Activated naive CD8-positive, alpha-beta T cell treated with anti-CD3 and anti-CD28 coated beads, Interleukin-2, amount 10 ng/mL, durations not matched to agents 7 days and 5 days (primary cell): ENCODE measurements at regions of chr4 and their contacts with region 1.

Region 1: DNA sequence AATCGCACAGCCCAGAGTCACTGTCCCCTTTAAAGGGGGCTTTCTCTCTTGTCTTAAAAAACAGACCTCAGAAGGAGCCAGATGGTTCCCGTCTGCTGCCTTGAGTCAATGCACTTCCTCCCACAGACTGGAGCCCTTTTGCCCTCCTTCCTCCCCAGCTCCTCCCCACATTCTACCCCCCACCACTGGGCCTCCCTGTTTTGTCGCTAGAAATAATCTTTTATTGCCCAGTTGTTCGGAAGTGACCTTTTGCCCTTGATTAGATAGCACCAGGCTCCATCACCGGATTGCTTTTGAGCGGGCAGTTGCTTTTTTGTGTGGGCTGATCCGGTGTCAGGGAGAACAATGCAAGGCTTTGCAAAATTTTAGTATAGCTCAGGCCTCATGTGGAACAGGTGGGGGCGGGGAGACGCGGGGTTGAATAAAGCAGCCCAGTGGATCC is 47.7 kb downstream of the SPRY1 start:
- DNase-seq: peak; percentile 56
- ATAC-seq: peak; percentile 87
- H3K4me3 Mint-ChIP-seq: peak overlapping the region; percentile 71
- H3K27ac Mint-ChIP-seq: peak overlapping the region; percentile 84
- H3K4me1 Mint-ChIP-seq: peaks cover 29% of the 10 kb centered on the region
- H3K27me3 Mint-ChIP-seq: no peaks in the 10 kb centered on the region

Region 2: GRCh38 chr4:123418351-123418931 is 25.9 kb before region 1 on chr4:
- POLR2A ChIA-PET with region 1: interaction called, 13 read pairs
- DNase-seq: no peak
- ATAC-seq: peak; percentile 48
- H3K4me3 Mint-ChIP-seq: peak overlapping the region; percentile 73
- H3K27ac Mint-ChIP-seq: peak overlapping the region; percentile 95
- H3K4me1 Mint-ChIP-seq: peaks cover 74% of the 10 kb centered on the region
- H3K27me3 Mint-ChIP-seq: no peaks in the 10 kb centered on the region

Region 3: GRCh38 chr4:123423819-123424218 is 20.5 kb before region 1 on chr4:
- POLR2A ChIA-PET with region 1: interaction called, 13 read pairs
- DNase-seq: no peak
- ATAC-seq: peak; percentile 7
- H3K4me3 Mint-ChIP-seq: peak overlapping the region; percentile 11
- H3K27ac Mint-ChIP-seq: peak overlapping the region; percentile 95
- H3K4me1 Mint-ChIP-seq: peaks cover 51% of the 10 kb centered on the region
- H3K27me3 Mint-ChIP-seq: no peaks in the 10 kb centered on the region